Head of caudate nucleus (tissue), 42 donors: ENCODE measurements at regions of chr16 and their contacts with region 1.

Region 1: DNA sequence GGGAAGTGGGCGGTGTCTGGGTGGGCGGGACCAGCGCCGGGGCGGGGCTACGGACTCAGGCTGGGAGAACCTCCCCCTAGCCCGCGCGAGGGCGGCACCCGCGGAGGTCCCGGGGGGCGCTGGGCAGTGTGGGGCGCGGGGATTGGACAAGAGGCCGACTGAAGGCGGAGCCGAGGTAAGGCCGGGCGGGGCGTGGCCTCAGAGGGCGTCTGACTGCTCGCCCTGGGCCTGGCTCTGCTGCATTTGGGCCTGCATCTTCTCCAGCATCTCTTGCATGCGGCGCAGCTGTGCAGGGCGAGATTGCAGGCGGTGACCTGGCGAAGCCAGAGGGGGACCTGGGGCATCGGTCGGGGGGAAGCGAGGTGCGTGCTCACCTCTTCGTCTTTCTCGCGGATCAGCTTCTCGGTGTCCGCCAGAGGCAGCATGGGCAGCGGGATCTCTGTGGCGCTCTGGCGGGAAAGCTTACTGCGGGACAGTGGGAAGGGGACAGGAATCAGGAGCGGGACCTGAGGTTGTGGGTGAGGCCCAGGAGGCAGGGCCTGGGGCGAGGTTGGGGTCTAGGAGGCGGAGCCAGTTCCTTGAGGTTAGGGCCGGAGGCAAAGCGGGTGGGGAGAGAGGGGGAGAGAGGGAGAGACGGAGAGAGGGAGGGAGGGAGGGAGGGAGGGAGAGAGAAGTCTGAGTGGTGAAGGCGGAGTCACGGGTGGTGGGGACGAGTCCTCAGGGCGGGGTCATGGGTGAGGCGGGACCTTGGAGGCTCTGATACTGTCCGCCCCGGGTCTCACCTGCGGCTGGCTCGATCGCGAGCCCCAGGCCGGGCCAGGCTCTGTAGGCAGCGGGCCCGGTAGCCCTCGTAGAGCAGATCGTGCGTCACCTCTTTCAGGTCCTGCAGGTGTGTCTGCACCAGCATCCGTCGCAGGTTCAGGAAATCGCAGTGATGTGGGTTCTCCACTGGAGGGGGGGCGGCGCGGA is 3.8 kb downstream of the SEPTIN1 start:
- DNase-seq: peak; percentile 98 to 100 (median 100)

Region 2: DNA sequence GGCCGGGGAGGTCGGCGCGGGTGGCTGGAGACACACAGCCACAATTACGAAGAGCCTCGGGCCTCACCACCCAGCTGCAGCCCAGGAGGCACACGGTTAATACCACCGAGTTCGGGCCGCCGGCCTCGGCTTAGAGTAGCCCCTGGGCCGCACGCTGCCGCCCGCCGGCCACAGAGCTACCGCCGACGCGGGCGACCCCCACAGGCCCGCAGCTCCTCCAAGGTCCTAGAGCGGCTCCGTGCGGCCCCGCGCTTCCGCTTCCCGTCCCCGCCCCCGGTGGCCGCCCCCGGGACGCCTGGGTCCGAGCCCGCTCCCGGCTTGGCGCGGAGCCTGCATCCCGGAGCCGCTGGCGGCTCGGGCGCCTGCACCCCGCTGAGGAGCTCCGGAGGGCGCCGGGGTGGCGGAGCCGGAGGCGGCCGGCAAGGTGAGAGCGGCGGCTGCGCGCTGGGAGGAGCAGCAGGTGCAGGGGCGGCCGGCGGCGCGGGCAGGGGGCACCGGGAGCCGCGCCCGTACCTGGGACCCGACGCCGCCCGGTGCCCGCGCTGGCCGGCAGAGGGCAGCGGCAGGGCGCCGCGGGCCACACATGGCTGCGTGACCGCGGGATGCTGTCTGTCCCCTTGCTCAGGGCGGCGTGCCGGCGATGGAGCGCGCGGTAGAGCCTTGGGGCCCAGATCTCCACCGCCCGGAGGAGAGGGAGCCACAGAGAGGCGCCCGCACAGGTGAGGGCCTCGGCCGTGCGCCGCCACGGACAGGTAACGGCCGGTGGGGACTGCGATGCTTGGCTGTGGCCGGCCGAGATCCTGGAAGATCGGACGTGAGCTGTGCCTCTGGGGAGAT is 16.9 kb after region 1 on chr16 and contains the start of gene ZNF48:
- intact Hi-C with region 1: loop called (anchors 2 kb)
- DNase-seq: peak; percentile 66 to 95 (median 89)